Ascending aorta (tissue), 2 donors: ENCODE measurements at regions of chr1 and their contacts with region 1.

Region 1: GRCh38 chr1:231337472-231338269 is at the start of gene EXOC8:
- DNase-seq: peak; percentile 82 to 98
- H3K4me3 ChIP-seq: peak within 1 kb of the TSS; percentile 81 to 90
- H3K27ac ChIP-seq: peak within 1 kb of the TSS; percentile 92 to 97
- H3K4me1 ChIP-seq: peaks cover 8 to 40% of the 10 kb centered on the region in 2 donors
- H3K27me3 ChIP-seq: no peaks in the 10 kb centered on the region
- CTCF ChIP-seq: no peak
- total RNA-seq, gene EXOC8: 9.9 TPM

Region 2: DNA sequence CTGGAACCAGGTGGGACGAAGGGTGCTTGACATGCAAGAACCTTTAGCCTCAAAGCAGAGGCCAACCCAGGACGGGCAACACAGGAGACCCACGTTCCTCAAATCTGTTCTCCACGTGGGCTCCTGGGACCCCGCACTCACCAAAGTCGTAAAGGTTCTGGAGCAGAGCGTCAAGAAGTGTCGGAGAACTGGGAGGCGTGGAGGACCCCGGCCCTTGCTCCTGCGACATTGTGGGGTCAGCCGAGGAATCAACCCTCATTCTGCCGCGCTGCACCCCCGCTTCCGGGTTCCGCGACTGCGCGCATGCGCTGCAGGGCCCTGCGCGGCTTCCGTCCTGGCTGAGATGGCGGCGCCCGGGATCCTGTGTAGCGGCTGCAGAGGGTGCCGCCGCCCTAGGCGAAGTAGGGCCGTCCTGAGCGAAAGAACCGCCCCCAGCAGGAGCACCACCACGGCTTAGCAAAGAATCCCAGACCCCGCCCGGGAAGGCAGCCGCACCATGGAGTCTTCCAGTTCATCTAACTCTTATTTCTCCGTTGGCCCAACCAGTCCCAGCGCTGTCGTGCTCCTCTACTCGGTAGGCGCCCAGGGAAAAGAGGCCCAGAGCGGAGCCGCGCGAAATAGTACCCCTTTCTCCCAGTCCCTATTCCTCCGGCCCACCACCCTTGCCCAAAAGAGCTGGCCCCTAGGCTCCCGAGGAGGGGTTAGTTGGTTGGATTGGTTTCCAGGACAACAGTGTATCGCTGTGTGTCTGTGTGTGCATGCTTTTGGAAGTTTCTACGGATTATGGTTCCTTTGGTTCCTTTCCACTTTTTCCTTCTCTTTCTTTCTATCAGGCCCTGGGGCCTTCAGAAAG is 96.6 kb before region 1 on chr1 and contains the start of gene GNPAT:
- intact Hi-C with region 1: loop called (anchors 5 kb)
- DNase-seq: peak; percentile 23 to 92
- H3K4me3 ChIP-seq: peak within 1 kb of the TSS; percentile 85 to 90
- H3K27ac ChIP-seq: peak within 1 kb of the TSS; percentile 82 to 84
- H3K4me1 ChIP-seq: peaks cover 0 to 18% of the 10 kb centered on the region in 2 donors
- H3K27me3 ChIP-seq: no peaks in the 10 kb centered on the region
- CTCF ChIP-seq: no peak
- total RNA-seq, gene GNPAT: 34.8 TPM

Region 3: GRCh38 chr1:231395076-231395995 is 57.7 kb after region 1 on chr1:
- intact Hi-C with region 1: loop called (anchors 1 kb)
- DNase-seq: peak in 1 of 2 donors; percentile 74
- H3K4me3 ChIP-seq: peak overlapping the region; percentile 7 to 27
- H3K27ac ChIP-seq: peak overlapping the region; percentile 79 to 85
- H3K4me1 ChIP-seq: peaks cover 0 to 15% of the 10 kb centered on the region in 2 donors
- H3K27me3 ChIP-seq: no peaks in the 10 kb centered on the region
- CTCF ChIP-seq: no peak